Aorta (tissue), 5 donors: ENCODE measurements at regions of chr4 and their contacts with region 1.

Region 1: DNA sequence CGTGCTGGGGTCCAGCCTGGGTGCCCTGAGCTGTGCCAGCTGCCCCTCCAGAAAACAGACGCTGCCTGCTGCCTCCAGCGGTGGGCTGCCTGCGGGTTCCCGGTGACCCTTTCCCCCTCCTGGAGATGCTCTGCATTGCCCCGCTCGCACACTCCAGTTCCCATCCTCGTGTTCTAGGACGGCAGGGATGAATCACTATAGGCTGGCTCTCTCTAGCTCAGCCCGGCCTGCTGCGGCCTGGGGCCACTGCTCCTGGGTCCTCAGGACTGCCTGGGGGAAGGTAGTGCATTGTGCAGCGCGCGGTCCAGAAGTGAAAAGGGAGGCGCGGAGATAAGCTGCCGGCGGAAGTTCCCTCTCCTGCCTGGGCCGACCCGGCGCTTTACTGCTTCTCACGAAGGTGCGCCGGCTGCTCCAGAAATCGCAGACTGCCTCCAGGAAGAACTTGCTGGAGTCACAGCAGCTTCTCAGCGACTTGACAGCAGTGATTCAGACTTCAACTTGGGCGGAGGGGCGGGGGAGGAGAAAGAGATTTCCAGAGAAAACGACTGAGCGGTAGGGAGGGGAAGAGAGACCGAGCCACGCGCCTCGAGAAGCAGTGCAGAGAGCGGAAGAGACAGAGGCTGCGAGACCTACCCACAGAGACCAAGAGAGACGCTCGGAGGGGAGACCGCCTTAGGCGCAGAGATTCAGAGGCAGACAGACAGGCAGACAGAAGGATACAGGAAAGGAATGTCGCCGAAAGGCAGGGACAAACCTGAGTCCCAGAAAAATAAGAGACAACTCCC is 6.7 kb upstream of the MSX1 start:
- DNase-seq: peak; percentile 67 to 76
- ATAC-seq: peak; percentile 74
- H3K4me3 ChIP-seq: peak overlapping the region; percentile 23 to 30
- H3K27ac ChIP-seq: peak overlapping the region in 1 of 2 donors; percentile 29
- H3K4me1 ChIP-seq: no peaks in the 10 kb centered on the region
- H3K27me3 ChIP-seq: no peaks in the 10 kb centered on the region

Region 2: DNA sequence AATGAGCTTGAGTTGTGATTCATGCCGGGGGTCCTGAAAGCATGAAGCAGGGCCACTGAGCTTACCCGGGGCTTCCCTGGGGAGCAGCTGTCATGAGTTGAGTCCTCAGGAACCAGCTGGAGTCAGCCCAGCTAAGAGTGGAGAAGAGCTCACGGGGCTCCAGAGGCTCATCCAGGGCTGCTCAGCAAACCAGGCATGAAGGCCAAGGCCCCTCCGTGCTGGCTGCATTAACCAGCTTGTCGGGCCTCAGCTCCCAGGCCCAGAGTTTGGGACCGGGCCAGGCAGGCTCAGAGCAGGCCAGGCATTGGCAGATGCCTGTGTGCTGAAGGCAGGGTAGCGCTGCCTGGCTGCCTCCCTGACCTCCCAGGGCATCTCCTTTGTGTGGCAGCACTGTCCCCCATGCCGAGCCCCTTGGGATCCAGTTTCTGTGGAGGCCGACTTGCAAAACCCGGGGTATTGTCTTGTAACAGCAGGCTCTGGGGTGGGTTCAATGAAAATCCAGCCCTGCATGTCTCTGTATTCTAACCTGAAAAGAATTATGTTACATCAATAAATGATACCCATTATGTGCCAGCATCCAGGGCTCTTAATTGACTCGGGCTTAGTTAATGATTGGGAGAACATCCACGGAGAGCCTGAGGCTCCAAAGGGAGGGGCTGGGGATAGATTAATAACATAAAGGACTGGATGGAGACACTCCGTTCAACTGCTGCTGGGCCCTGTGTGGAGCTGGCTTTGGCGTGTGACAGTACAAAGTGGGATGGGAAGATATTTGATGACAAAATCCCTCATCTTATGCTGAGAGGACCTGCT is 61.3 kb before region 1 on chr4:
- intact Hi-C with region 1: loop called in 1 of 2 experiments (anchors 5 kb)
- DNase-seq: peak in 1 of 2 donors; percentile 59
- ATAC-seq: no peak
- H3K4me3 ChIP-seq: no peak overlapping the region
- H3K27ac ChIP-seq: peak overlapping the region in 1 of 2 donors; percentile 54
- H3K4me1 ChIP-seq: peaks cover 0 to 3% of the 10 kb centered on the region in 2 donors
- H3K27me3 ChIP-seq: no peaks in the 10 kb centered on the region

Region 3: GRCh38 chr4:4810092-4810774 is 42.5 kb before region 1 on chr4:
- intact Hi-C with region 1: no loop called
- DNase-seq: no peak
- ATAC-seq: no peak
- H3K4me3 ChIP-seq: no peak overlapping the region
- H3K27ac ChIP-seq: no peak overlapping the region
- H3K4me1 ChIP-seq: no peaks in the 10 kb centered on the region
- H3K27me3 ChIP-seq: no peaks in the 10 kb centered on the region